ENCODE measurements at regions of chr18 and their contacts with region 1.

Region 1: GRCh38 chr18:54119524-54120019 is 104.9 kb downstream of the MBD2 start:
- DNase-seq: peak; percentile 31
- CTCF ChIP-seq: peak; percentile 49

Region 2: GRCh38 chr18:53567929-53568574 is 551.5 kb before region 1 on chr18:
- in situ Hi-C with region 1: loop called (anchors 10 kb)
- DNase-seq: peak; percentile 42
- CTCF ChIP-seq: peak; percentile 39

Region 3: DNA sequence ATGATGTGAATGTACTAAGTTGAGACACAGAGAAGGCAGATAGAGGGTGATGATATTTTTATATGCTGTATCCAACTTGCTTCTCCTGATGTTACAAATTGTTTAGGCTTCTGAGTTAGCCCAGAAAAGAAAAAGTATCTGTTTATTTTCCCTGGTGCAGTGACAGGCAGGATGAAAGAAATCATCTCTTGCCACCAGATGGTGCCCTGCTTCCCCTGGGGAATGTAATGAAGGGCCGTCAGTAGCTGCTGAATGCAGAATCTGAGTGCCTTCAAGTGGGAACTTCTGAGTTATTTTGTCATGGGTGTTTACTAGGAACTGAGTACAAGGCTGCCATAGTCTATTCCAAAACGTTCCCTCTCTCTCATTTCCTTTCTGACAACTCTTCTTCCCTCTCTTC is 420.7 kb before region 1 on chr18:
- in situ Hi-C with region 1: loop called (anchors 25 kb)
- DNase-seq: peak; percentile 30
- CTCF ChIP-seq: peak; percentile 34

Region 4: DNA sequence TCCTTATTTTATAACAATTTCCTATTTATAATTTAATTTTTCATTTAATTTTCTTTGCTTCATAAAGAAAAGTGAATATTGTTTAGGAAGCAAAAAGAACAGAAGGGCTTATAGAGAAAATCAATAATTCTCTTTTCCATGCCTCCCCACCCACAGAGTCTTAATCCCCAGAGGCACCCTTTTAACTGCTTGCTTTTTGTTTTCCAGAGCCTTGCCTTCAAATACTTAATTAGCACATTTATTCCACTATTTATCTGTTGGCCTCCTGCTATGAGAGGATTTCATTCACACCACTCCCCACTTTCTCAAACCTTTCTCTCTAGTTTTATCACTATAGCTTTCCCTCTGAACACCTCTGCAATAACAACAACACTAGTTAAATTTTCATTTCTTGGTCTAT is 268.7 kb before region 1 on chr18:
- in situ Hi-C with region 1: no loop called
- DNase-seq: no peak
- CTCF ChIP-seq: no peak